Activated naive CD4-positive, alpha-beta T cell treated with anti-CD3 and anti-CD28 coated beads for 36 hours (primary cell): ENCODE measurements at regions of chr6 and their contacts with region 1.

Region 1: DNA sequence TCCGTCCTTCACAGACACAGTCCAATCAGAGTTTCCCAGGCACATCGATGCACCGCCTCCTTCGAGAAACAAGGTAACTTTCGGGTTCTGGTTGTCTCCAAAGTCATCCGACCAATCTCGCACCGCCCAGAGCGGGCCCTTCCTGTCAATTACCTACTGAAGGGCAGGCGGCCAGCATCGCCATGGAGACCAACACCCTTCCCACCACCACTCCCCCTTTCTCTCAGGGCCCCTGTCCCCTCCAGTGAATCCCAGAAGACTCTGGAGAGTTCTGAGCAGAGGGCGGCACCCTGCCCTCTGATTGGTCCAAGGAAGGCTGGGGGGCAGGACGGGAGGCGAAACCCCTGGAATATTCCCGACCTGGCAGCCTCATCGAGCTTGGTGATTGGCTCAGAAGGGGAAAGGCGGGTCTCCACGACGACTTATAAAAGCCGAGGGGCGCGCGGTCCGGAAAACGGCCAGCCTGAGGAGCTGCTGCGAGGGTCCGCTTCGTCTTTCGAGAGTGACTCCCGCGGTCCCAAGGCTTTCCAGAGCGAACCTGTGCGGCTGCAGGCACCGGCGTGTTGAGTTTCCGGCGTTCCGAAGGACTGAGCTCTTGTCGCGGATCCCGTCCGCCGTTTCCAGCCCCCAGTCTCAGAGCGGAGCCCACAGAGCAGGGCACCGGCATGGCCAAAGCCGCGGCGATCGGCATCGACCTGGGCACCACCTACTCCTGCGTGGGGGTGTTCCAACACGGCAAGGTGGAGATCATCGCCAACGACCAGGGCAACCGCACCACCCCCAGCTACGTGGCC is at the start of gene HSPA1B:
- DNase-seq: peak; percentile 98
- H3K4me3 Mint-ChIP-seq: peak within 1 kb of the TSS; percentile 85
- H3K27ac Mint-ChIP-seq: peak within 1 kb of the TSS; percentile 97
- H3K4me1 Mint-ChIP-seq: peaks cover 46% of the 10 kb centered on the region
- H3K27me3 Mint-ChIP-seq: no peaks in the 10 kb centered on the region
- total RNA-seq, gene HSPA1B: 47.8 to 50.1 TPM

Region 2: DNA sequence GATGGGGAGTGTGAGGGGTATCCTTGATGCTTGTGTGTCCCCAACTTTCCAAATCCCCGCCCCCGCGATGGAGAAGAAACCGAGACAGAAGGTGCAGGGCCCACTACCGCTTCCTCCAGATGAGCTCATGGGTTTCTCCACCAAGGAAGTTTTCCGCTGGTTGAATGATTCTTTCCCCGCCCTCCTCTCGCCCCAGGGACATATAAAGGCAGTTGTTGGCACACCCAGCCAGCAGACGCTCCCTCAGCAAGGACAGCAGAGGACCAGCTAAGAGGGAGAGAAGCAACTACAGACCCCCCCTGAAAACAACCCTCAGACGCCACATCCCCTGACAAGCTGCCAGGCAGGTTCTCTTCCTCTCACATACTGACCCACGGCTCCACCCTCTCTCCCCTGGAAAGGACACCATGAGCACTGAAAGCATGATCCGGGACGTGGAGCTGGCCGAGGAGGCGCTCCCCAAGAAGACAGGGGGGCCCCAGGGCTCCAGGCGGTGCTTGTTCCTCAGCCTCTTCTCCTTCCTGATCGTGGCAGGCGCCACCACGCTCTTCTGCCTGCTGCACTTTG is 252.1 kb before region 1 on chr6 and contains the start of gene TNF:
- CTCF ChIA-PET with region 1: no interaction called
- intact Hi-C with region 1: loop called (anchors 2 kb)
- DNase-seq: peak; percentile 87
- H3K4me3 Mint-ChIP-seq: peak within 1 kb of the TSS; percentile 94
- H3K27ac Mint-ChIP-seq: peak within 1 kb of the TSS; percentile 97
- H3K4me1 Mint-ChIP-seq: peaks cover 65% of the 10 kb centered on the region
- H3K27me3 Mint-ChIP-seq: no peaks in the 10 kb centered on the region
- total RNA-seq, gene TNF: 31.6 to 33.2 TPM

Region 3: DNA sequence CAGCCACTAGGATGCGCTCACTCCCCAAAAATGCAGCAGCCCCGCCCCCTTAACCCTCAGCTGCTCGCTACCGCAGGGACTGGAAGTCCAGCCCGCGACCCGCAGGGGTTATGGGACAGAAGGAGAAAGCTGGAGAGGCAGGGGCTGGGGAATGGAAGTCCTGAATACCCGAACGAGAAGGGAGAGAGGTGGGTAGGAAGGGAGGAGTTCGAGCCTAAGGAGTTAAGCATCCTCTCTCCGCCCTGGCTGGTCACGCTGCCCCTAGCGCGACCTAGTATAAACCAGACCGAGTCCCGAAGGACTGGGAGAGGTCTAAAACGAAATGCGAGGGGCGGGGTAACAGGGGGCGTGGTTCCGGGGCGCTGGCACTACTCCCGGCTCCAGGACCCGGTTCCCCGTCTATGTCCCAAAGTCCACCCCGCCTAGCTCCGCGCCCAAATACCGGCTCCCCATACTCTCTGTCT is 97.9 kb before region 1 on chr6:
- CTCF ChIA-PET with region 1: interaction called, 11 read pairs
- intact Hi-C with region 1: loop called (anchors 1 kb)
- DNase-seq: peak; percentile 81
- H3K4me3 Mint-ChIP-seq: peak overlapping the region; percentile 79
- H3K27ac Mint-ChIP-seq: peak overlapping the region; percentile 72
- H3K4me1 Mint-ChIP-seq: peaks cover 59% of the 10 kb centered on the region
- H3K27me3 Mint-ChIP-seq: no peaks in the 10 kb centered on the region

Region 4: DNA sequence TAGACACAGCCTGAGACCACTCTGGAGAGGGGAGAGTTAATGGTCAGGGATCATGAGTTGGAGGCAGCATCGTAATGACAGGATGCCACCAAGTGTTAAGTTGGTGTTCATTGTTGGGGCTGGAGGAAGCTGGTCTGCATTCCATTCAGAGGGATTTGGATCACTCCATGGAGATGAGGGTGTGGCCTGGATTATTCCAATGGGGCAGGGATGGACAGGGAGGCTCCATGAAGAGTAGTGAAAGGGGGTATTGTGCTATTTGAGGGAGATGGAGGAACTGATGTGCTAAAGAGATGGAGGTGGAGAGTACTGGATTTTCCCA is 63.9 kb before region 1 on chr6:
- CTCF ChIA-PET with region 1: no interaction called
- intact Hi-C with region 1: no loop called
- DNase-seq: no peak
- H3K4me3 Mint-ChIP-seq: no peak overlapping the region
- H3K27ac Mint-ChIP-seq: no peak overlapping the region
- H3K4me1 Mint-ChIP-seq: peaks cover 2% of the 10 kb centered on the region
- H3K27me3 Mint-ChIP-seq: no peaks in the 10 kb centered on the region

Region 5: DNA sequence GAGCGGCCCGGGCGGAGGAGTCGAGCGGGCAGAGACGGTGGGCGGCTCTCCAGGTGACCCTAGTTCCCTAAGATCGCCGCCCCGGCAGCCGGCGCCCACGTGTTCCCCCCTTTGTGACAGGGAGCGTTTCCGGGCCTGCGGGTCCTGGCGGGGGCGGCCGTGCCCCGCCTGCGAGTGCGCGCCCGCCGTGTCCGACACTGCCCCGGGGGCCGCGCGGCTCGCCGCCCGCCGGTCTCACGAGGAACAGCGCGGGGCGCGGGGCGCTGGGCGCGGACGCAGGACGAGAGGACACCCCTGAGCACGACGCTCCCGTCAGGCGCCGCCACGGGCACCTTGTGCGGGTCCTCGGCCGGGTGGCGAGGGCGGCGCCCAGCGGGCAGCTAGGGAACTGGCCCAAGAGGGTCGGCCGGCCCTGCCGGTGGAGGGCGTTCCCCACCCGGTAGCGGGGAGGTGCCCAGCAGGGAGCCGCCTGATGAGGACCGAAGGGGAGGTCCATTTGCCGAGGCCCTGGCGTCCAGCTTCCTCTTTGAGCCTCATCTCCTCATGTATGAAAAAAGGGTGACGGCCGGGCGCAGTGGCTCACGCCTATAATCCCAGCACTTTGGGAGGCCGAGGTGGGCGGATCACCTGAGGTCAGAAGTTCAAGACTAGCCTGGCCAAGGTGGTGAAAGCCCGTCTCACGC is 31.7 kb before region 1 on chr6 and contains the start of gene VARS1:
- CTCF ChIA-PET with region 1: interaction called, 8 read pairs
- intact Hi-C with region 1: loop called (anchors 1 kb)
- DNase-seq: peak; percentile 89
- H3K4me3 Mint-ChIP-seq: peak within 1 kb of the TSS; percentile 99
- H3K27ac Mint-ChIP-seq: peak within 1 kb of the TSS; percentile 96
- H3K4me1 Mint-ChIP-seq: peaks cover 43% of the 10 kb centered on the region
- H3K27me3 Mint-ChIP-seq: no peaks in the 10 kb centered on the region
- total RNA-seq, gene VARS1: 157 to 161 TPM

Region 6: DNA sequence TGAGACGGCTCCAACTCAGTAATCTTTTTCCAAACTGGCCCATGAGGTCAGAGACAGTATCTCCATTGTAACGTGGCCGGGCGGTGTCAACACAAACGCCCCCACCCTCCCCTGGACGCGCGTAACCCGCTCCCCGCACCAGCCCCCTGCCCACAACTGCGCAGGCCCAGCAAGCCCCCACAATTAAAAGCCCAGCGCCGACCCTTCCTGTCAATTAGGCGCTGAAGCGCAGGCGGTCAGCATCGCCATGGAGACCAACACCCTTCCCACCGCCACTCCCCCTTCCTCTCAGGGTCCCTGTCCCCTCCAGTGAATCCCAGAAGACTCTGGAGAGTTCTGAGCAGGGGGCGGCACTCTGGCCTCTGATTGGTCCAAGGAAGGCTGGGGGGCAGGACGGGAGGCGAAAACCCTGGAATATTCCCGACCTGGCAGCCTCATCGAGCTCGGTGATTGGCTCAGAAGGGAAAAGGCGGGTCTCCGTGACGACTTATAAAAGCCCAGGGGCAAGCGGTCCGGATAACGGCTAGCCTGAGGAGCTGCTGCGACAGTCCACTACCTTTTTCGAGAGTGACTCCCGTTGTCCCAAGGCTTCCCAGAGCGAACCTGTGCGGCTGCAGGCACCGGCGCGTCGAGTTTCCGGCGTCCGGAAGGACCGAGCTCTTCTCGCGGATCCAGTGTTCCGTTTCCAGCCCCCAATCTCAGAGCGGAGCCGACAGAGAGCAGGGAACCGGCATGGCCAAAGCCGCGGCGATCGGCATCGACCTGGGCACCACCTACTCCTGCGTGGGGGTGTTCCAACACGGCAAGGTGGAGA is 12.3 kb before region 1 on chr6 and contains the starts of genes HSPA1A and HSPA1L:
- CTCF ChIA-PET with region 1: interaction called, 6 read pairs
- intact Hi-C with region 1: loop called (anchors 2 kb)
- DNase-seq: peak; percentile 60
- H3K4me3 Mint-ChIP-seq: peak within 1 kb of the TSS; percentile 84
- H3K27ac Mint-ChIP-seq: peak within 1 kb of the TSS; percentile 96
- H3K4me1 Mint-ChIP-seq: peaks cover 54% of the 10 kb centered on the region
- H3K27me3 Mint-ChIP-seq: no peaks in the 10 kb centered on the region
- total RNA-seq, gene HSPA1A: 19.8 to 23.1 TPM
- total RNA-seq, gene HSPA1L: 0.86 to 0.95 TPM